ENCODE measurements at regions of chr2 and their contacts with region 1.

Region 1: DNA sequence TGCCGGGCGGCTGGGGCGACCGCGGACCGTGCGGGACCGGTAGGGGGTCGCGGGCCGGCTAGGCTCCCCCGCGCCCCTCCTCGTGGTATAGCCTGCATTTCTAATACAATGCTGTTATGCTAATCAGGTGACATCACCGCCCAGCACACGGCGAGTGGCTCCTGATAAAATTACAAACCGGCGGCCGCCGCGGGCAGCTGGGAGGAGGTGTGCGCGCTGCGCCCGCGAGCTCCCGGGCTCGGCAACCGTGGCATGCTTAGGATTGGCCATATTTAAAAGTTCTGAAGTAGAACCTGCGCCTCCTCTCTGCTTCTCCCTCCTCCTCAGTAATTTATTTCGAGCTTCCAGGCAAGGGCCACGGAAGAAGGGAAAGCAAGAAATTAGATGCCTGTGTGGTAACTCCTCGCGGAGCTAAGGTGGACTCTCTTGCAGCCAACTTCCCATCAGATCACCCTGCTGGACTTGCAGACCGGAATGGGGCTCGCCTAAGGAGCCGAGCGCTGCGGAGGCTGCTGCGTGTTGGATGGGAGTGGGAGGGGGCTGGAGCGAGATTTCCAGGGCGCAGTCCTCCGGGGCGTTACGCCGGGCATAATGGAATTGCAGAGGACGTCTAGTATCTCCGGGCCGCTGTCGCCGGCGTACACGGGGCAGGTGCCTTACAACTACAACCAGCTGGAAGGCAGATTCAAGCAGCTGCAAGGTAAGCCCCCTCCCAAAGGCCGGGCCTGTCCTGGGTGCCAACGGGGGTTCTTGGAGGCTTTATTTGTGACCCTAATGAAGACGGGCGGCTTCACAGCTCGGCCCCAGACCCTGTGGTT is 102.3 kb downstream of the SPTBN1 start:
- DNase-seq: peak; percentile 81
- ATAC-seq: peak; percentile 74
- H3K4me3 Mint-ChIP-seq: peak overlapping the region; percentile 90
- H3K27ac Mint-ChIP-seq: peak overlapping the region; percentile 86
- H3K4me1 Mint-ChIP-seq: peaks cover 46% of the 10 kb centered on the region
- H3K27me3 Mint-ChIP-seq: no peaks in the 10 kb centered on the region

Region 2: DNA sequence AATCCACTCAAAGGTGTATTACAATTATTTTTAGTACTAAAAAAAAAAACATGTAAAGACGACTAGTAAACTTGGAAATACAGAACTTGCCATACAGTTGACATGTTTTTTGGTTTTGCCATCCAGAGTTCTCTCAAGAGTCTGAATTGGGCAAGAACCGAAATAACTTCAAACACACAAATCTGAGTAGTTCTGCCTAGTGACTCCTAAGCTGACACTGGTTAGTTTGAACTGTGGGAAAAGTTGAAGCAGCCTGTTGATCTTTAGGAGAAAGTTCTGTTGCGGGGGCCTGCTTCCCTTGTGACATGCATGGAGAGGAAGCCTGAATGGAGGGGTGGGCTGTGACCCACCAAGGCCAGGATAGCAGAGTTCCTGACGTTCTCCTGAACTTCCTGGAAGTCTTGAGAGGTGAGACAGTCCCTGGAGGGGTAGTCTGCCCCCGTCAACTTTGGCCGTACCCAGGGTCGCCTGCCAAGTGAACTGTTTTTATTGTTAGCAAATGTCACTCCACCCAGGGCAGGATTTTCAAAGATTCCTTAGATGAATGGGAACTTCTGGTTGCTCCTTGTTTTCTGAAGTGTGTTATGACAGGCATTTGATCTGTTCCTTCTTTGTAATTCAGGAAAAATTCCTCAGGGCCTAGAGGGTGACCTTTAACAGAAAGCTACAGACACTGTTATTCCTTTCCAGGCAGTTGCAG is 187.8 kb before region 1 on chr2:
- CTCF ChIA-PET with region 1: no interaction called
- DNase-seq: no peak
- ATAC-seq: no peak
- H3K4me3 Mint-ChIP-seq: no peak overlapping the region
- H3K27ac Mint-ChIP-seq: no peak overlapping the region
- H3K4me1 Mint-ChIP-seq: no peaks in the 10 kb centered on the region
- H3K27me3 Mint-ChIP-seq: peaks cover 14% of the 10 kb centered on the region

Region 3: GRCh38 chr2:54522624-54523281 is 35.6 kb before region 1 on chr2:
- CTCF ChIA-PET with region 1: interaction called, 36 read pairs
- DNase-seq: peak; percentile 71
- ATAC-seq: peak; percentile 96
- H3K4me3 Mint-ChIP-seq: no peak overlapping the region
- H3K27ac Mint-ChIP-seq: no peak overlapping the region
- H3K4me1 Mint-ChIP-seq: peaks cover 22% of the 10 kb centered on the region
- H3K27me3 Mint-ChIP-seq: peaks cover 10% of the 10 kb centered on the region

Region 4: DNA sequence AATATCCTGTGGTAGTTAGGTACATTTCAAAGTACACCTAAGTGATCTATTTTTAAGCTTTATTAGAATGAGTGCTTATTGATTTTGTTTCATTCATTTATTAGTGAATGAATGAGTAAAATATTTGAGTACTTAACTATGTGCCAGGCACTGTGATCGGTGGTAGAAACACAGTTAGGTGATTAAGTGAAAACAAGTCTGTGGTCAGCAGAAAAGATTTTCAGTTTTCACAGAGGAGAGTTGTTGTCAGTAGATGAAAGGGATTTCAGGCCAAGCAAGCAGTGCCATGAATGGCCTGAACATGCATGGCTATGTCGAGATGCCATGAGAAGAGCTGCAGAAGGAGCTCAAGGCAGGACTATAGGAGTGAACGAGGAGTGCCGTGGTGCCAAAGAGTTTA is 16.4 kb before region 1 on chr2:
- CTCF ChIA-PET with region 1: no interaction called
- DNase-seq: no peak
- ATAC-seq: no peak
- H3K4me3 Mint-ChIP-seq: no peak overlapping the region
- H3K27ac Mint-ChIP-seq: no peak overlapping the region
- H3K4me1 Mint-ChIP-seq: peaks cover 2% of the 10 kb centered on the region
- H3K27me3 Mint-ChIP-seq: peaks cover 10% of the 10 kb centered on the region

Region 5: DNA sequence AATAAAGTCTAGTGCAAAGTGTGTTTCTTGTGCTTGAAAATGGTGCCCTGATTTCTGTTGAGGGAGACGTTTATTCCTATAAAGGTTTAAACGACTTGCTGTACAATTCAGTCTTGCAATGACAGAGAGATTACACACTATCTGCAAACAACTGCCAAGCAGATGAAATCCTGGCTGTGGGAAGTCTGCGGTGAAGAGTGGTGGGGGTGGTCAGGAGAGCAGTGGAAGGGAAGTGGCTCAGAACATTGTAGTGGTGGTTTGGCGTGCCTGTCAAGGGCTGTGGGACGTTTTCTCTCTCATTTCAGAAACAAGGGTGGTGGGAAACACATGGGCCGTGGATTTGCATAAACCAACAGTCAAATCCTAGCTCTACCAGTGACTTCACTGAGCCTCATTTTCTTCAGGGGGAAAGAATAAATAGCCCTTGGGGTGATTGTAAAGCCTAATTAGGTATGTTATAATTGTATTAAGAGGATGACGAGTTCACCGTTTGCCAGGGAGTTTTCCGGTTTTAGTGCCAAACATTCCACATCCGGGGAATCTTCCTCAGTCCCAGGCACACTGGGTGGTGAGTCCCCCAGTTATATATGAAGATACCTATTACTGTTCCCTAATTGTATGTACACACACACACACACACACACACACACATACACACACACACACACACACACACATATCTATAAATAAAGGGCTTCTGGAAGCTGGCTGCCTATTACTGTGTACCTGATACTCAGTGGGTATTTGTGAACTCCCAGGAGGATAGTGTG is 12.7 kb after region 1 on chr2:
- CTCF ChIA-PET with region 1: interaction called, 87 read pairs
- DNase-seq: peak; percentile 95
- ATAC-seq: peak; percentile 37
- H3K4me3 Mint-ChIP-seq: peak overlapping the region; percentile 57
- H3K27ac Mint-ChIP-seq: peak overlapping the region; percentile 94
- H3K4me1 Mint-ChIP-seq: peaks cover 87% of the 10 kb centered on the region
- H3K27me3 Mint-ChIP-seq: no peaks in the 10 kb centered on the region

Region 6: DNA sequence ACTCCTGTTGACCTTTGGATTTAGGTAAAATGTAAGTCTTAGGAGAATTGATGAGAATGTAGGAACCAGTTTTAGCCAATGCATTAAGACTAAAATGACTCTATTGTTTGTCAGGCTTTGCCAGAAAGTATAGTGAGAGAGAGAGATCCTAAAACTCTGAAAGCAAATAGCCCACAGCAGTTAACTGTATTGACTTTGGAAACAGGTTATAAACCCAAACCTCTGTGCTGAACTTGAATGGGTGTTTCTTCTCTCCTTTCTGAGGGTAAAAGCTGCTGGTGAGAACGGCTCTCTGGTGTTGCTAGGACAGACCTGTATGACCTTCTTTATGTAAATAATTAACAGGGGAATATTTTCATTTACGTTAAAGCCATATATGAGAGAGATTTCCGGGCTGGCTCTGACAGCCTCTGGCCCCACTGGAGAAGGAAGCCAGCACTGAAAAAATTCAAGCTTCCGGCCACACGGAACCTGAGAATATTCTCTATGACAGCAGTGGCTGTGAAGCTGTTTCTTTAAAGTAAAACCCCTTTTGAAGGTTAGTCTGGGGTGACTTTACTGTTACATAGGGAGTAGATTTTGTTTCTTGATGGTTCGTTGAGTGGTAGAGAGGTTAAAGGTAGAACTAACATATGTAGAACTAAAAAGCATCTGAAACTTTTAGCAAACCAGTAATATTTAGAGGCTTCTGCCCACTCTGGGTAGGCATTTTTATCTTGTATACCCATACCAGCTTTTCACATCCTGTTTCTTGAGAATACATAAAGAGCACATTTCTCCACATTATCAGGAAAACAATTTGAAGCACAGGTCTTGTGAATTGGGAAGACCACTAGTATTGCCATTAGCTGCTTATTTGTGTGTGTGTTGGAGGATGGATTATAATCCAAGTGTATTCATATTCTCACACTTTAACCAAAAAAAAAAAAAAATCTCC is 21.6 kb after region 1 on chr2:
- CTCF ChIA-PET with region 1: interaction called, 87 read pairs
- DNase-seq: peak; percentile 73
- ATAC-seq: peak; percentile 74
- H3K4me3 Mint-ChIP-seq: peak overlapping the region; percentile 40
- H3K27ac Mint-ChIP-seq: peak overlapping the region; percentile 88
- H3K4me1 Mint-ChIP-seq: peaks cover 83% of the 10 kb centered on the region
- H3K27me3 Mint-ChIP-seq: no peaks in the 10 kb centered on the region

Region 7: GRCh38 chr2:54657664-54658083 is 99.3 kb after region 1 on chr2:
- CTCF ChIA-PET with region 1: interaction called, 12 read pairs
- DNase-seq: peak; percentile 52
- ATAC-seq: no peak
- H3K4me3 Mint-ChIP-seq: no peak overlapping the region
- H3K27ac Mint-ChIP-seq: no peak overlapping the region
- H3K4me1 Mint-ChIP-seq: peaks cover 22% of the 10 kb centered on the region
- H3K27me3 Mint-ChIP-seq: no peaks in the 10 kb centered on the region

Region 8: DNA sequence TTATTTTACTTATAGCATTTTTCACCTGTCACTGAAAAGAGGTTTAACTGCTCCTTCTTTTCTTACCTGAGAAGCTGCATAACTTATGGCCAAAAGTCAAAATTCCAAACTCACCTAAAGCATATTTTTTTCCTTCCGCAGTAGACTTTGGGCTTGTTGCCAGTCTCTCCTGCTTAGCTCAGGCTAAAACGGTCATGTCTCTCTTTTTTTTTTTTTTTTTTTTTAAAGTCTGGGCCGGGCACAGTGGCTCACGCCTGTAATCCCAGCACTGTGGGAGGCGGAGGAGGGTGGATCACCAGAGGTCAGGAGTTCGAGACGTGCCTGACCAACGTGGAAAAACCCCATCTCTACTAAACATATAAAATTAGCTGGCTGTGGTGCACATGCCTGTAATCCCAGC is 378.4 kb after region 1 on chr2:
- CTCF ChIA-PET with region 1: no interaction called
- DNase-seq: no peak
- ATAC-seq: no peak
- H3K4me3 Mint-ChIP-seq: no peak overlapping the region
- H3K27ac Mint-ChIP-seq: no peak overlapping the region
- H3K4me1 Mint-ChIP-seq: no peaks in the 10 kb centered on the region
- H3K27me3 Mint-ChIP-seq: no peaks in the 10 kb centered on the region